Panc1 (cell line): ENCODE measurements at regions of chr6 and their contacts with region 1.

Region 1: DNA sequence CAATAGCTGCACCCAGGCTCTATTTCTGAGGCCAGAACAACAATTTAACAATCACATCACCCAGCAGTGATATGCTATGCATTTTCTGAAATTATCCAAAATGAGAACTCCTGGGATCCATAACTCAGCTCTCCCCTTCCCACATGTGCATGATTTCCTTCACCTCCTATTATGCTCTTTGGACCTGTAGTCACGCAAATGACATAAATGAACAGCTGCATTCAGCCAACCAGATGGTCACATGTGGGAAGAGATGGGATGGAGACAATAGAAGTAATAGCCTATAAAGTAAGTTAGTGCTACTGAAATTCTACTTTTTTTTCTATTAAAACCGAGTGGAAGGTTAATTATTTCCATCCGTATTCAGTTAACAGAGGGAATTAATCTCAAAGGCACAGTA is 662.1 kb upstream of the ID4 start:
- DNase-seq: no peak
- ATAC-seq: no peak
- H3K4me3 ChIP-seq: no peak overlapping the region
- H3K27ac ChIP-seq: no peak overlapping the region
- H3K4me1 ChIP-seq: no peaks in the 10 kb centered on the region
- H3K27me3 ChIP-seq: no peaks in the 10 kb centered on the region
- CTCF ChIP-seq: no peak

Region 2: GRCh38 chr6:19193624-19194023 is 18.6 kb after region 1 on chr6:
- CTCF ChIA-PET with region 1: no interaction called
- POLR2A ChIA-PET with region 1: interaction called, 13 read pairs
- in situ Hi-C with region 1: no loop called
- intact Hi-C with region 1: no loop called
- DNase-seq: no peak
- ATAC-seq: no peak
- H3K4me3 ChIP-seq: no peak overlapping the region
- H3K27ac ChIP-seq: no peak overlapping the region
- H3K4me1 ChIP-seq: no peaks in the 10 kb centered on the region
- H3K27me3 ChIP-seq: no peaks in the 10 kb centered on the region
- CTCF ChIP-seq: no peak